Activated naive CD4-positive, alpha-beta T cell treated with anti-CD3 and anti-CD28 coated beads for 36 hours (primary cell): ENCODE measurements at regions of chr1 and their contacts with region 1.

Region 1: DNA sequence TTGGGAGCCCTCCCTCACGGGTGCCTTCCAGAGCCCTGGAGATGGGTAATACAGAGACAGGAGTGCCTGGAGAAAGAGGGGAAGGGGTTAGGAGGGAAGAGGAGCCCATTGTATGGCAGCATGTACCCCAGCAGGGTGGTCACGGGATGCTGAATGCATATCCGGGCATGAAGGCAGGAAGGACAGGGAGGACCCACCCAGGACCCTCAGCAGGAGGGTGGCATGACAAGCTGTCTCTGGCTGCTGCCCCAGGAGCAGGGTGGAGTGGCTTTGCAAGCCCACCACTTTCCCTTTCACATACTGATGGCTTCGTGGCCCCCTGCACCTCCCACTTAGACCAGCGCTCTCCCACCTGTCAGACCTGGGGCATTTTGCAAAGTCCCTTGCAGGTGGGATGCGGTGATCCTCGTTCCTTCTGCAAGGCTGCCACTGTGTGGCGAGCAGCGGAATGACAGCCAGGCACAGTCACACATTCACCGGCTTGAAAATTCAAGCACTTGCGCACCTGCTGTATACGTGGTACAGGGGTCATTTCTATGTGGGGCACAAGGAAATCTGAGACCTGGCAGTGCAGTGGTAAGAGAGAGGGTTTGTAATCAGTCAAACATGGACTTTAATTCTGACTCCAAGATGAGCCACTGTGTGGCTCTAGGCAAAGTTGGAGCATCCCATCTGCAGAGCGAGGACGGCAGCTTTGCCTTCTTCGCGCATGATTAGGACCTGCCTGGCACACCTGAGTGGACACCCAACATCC is 53.2 kb upstream of the TMEM51 start:
- DNase-seq: peak; percentile 71
- H3K4me3 Mint-ChIP-seq: no peak overlapping the region
- H3K27ac Mint-ChIP-seq: no peak overlapping the region
- H3K4me1 Mint-ChIP-seq: peaks cover 4% of the 10 kb centered on the region
- H3K27me3 Mint-ChIP-seq: peaks cover 25% of the 10 kb centered on the region

Region 2: DNA sequence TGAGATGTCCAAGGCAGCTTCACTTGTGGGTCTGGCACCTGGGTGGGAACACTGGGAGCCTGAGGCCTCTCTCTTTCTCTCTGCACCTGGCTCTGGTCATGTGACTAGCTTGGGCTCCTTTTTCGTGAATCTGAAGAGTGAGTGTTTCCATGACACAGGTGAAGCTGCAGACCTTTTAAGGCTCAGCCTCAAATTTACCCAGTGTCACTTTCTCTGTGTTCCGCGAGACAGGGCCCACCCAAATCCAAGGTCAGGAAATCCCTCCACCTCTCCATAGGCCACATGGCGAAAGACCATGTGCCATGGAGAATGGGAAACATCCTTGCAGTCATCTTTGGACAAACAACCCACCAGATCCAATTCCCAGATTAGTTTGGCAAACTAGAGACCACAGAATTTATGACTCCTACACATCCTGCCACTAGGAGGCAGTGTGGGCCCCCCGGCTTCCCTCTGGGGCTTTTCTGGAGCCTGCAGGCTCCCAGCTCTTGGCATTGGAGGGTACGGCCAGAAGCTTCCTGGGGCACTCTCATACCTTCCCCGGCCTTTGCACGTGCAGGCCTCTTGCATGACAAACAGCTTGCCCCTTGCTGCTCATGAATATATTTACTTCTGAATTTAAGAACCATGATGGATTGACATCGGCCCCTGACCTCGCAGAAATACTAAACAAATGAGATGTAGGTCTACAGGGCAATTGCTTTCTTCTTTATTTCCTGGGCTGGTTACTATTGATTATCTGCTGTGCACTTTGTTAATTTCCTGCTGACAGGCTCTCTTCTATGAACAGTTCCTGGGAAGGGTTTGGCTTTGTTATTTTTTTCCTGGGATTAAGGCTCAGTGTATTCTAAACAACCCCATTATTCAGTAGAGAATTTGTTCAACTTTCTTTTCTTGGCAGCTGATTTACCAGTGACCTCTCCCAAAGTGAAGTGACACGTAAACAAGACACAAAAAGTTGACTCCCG is 321.1 kb before region 1 on chr1:
- CTCF ChIA-PET with region 1: no interaction called
- intact Hi-C with region 1: loop called (anchors 5 kb)
- DNase-seq: peak; percentile 53
- H3K4me3 Mint-ChIP-seq: no peak overlapping the region
- H3K27ac Mint-ChIP-seq: no peak overlapping the region
- H3K4me1 Mint-ChIP-seq: peaks cover 2% of the 10 kb centered on the region
- H3K27me3 Mint-ChIP-seq: peaks cover 6% of the 10 kb centered on the region

Region 3: DNA sequence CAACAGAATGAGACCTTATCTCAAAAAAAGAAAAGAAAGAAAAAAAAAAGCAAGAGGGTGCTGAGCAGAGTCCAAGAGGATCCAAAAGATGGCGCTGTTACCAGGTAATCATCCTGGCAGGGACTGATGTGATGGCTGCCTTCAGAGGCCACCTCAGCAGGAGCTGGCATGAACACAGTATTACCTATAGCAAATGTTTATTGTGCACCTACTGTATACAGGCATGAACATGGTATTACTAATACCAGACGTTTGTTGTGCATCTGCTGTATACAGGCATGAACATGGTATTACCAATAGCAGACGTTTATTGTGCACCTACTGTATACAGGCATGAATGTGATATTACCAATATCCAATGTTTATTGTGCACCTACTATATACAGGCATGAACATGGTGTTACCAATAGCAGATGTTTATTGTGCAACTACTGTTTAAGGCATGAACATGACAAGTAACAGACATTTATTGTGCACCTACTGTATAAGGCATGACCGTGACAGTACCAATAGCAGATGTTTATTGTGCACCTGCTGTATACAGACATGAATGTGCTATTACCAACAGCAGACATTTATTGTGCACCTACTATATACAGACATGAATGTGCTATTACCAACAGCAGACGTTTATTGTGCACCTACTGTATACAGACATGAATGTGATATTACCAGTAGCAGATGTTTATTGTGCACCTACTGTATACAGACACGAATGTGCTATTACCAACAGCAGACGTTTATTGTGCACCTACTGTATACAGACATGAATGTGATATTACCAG is 61.9 kb before region 1 on chr1:
- CTCF ChIA-PET with region 1: no interaction called
- intact Hi-C with region 1: loop called (anchors 2 kb)
- DNase-seq: peak; percentile 52
- H3K4me3 Mint-ChIP-seq: no peak overlapping the region
- H3K27ac Mint-ChIP-seq: no peak overlapping the region
- H3K4me1 Mint-ChIP-seq: peaks cover 8% of the 10 kb centered on the region
- H3K27me3 Mint-ChIP-seq: no peaks in the 10 kb centered on the region

Region 4: DNA sequence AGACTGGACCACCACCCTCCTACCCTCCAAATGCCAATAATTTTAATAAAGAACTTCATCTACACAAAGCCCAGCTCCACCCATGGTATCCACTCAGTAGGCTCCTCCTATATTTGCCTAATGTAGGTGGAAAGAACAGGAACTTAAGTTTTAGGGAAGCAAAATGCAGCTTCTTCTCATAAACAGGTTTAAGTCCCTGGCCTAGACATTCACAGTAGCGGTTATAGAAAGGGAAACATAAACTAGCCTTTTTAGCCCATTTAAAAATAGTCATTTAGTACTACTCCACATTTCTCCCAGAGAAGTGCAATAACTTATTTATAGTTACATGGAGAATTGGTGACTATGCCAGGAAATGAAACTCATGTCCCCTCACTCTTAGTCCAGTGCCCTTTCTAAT is 1193.2 kb after region 1 on chr1:
- CTCF ChIA-PET with region 1: no interaction called
- intact Hi-C with region 1: no loop called
- DNase-seq: no peak
- H3K4me3 Mint-ChIP-seq: no peak overlapping the region
- H3K27ac Mint-ChIP-seq: no peak overlapping the region
- H3K4me1 Mint-ChIP-seq: no peaks in the 10 kb centered on the region
- H3K27me3 Mint-ChIP-seq: no peaks in the 10 kb centered on the region